Dendritic cell treated with granulocyte-macrophage colony-stimulating factor and Interleukin-4, amounts not matched to agents 40 ng/mL and 50 ng/mL, for 4 days (primary cell): ENCODE measurements at regions of chr6 and their contacts with region 1.

Region 1: GRCh38 chr6:12011276-12012076 is 636 bp upstream of the HIVEP1 start:
- H3K4me3 Mint-ChIP-seq: peak overlapping the region; percentile 89
- H3K27ac Mint-ChIP-seq: peak overlapping the region; percentile 100
- H3K4me1 Mint-ChIP-seq: peaks cover 24% of the 10 kb centered on the region
- H3K27me3 Mint-ChIP-seq: peaks cover 3% of the 10 kb centered on the region

Region 2: GRCh38 chr6:11971154-11971553 is 40.3 kb before region 1 on chr6:
- intact Hi-C with region 1: loop called (anchors 5 kb)
- H3K4me3 Mint-ChIP-seq: no peak overlapping the region
- H3K27ac Mint-ChIP-seq: no peak overlapping the region
- H3K4me1 Mint-ChIP-seq: peaks cover 6% of the 10 kb centered on the region
- H3K27me3 Mint-ChIP-seq: peaks cover 2% of the 10 kb centered on the region

Region 3: DNA sequence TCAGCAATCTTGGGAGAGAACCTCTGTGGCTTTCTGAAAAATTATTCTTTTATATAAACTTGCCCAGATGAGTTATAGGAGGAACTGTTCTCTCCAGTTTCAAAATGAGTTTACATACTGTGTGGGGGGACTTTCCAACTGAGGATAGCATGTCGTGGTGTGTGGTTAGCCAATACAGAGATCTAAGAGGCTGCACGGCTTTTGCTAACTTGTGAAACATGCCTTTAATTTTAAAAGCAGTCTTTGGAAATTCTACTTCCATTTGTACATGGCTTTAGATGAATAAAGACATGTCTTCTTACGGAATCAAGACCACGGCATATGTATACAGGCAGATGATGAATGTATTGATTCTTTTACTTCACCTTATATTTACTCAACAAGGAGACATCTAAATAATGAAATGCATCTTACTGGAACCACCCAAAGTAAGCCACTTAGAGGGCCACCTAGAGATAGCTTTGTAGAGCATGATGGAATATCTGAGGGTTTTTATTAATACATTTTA is 40.4 kb after region 1 on chr6:
- intact Hi-C with region 1: loop called (anchors 2 kb)
- H3K4me3 Mint-ChIP-seq: peak overlapping the region; percentile 52
- H3K27ac Mint-ChIP-seq: peak overlapping the region; percentile 83
- H3K4me1 Mint-ChIP-seq: peaks cover 44% of the 10 kb centered on the region
- H3K27me3 Mint-ChIP-seq: no peaks in the 10 kb centered on the region

Region 4: GRCh38 chr6:12060780-12061619 is 49.5 kb after region 1 on chr6:
- intact Hi-C with region 1: loop called (anchors 2 kb)
- H3K4me3 Mint-ChIP-seq: peak overlapping the region; percentile 80
- H3K27ac Mint-ChIP-seq: peak overlapping the region; percentile 89
- H3K4me1 Mint-ChIP-seq: peaks cover 44% of the 10 kb centered on the region
- H3K27me3 Mint-ChIP-seq: no peaks in the 10 kb centered on the region